ENCODE measurements at regions of chrX and their contacts with region 1.

Region 1: DNA sequence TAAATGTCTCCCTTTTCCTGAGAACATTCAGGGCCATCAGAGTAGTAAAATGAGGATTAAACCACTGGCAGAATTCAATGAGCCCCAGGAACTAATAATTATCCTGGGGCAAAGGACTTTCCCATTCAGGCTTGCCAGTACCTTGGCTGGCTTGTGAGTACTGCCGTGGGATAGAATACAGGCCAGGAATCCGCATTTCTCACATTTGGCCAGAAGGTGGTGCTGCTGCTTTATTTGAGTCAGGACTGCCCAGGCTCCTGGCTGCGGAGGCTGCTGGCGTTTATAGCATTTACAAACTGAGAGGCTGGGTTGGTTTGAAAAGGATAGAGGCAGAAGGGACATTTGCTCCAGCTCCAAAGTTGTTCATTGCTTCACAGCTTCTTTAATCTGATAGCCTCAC is 91.4 kb downstream of the RTL9 start:
- DNase-seq: peak; percentile 19 to 58
- ATAC-seq: peak; percentile 76 to 85
- H3K4me3 ChIP-seq: no peak overlapping the region
- H3K27ac ChIP-seq: no peak overlapping the region
- H3K4me1 ChIP-seq: no peaks in the 10 kb centered on the region
- H3K27me3 ChIP-seq: no peaks in the 10 kb centered on the region
- CTCF ChIP-seq: peak; percentile 44 to 70 (median 55)
- POLR2A ChIP-seq: no peak

Region 2: DNA sequence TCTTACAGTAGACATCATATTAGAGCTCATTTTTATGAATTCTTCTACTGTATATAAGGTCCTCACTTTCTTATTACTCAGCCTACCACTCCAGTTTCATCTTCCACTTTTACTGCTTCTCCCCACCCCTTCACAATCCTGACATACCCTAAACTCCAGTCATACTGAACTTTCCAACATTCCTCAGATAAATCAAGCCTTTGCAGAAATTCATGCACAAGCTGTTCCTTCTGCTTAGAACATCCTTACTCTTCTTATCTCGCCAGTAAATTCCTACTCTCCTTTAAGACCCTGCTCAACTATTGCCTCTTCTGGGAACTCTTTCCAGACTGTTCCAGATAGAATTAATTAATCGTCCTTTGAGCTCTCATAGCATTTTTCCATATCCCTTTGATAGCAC is 66.6 kb before region 1 on chrX:
- in situ Hi-C with region 1: no loop called
- intact Hi-C with region 1: no loop called
- DNase-seq: no peak
- ATAC-seq: no peak
- H3K4me3 ChIP-seq: no peak overlapping the region
- H3K27ac ChIP-seq: no peak overlapping the region
- H3K4me1 ChIP-seq: no peaks in the 10 kb centered on the region
- H3K27me3 ChIP-seq: no peaks in the 10 kb centered on the region
- CTCF ChIP-seq: no peak
- POLR2A ChIP-seq: no peak

Region 3: GRCh38 chrX:110665223-110666002 is 215.4 kb after region 1 on chrX:
- in situ Hi-C with region 1: loop called in 1 of 4 experiments (anchors 25 kb)
- intact Hi-C with region 1: loop called (anchors 5 kb)
- DNase-seq: no peak
- ATAC-seq: no peak
- H3K4me3 ChIP-seq: no peak overlapping the region
- H3K27ac ChIP-seq: no peak overlapping the region
- H3K4me1 ChIP-seq: no peaks in the 10 kb centered on the region
- H3K27me3 ChIP-seq: no peaks in the 10 kb centered on the region
- CTCF ChIP-seq: peak in 2 of 5 experiments; percentile 13 to 43
- POLR2A ChIP-seq: no peak

Region 4: GRCh38 chrX:110847334-110847733 is 397.3 kb after region 1 on chrX:
- in situ Hi-C with region 1: loop called (anchors 5 to 10 kb)
- intact Hi-C with region 1: loop called (anchors 1 kb)
- DNase-seq: no peak
- ATAC-seq: peak; percentile 63 to 65
- H3K4me3 ChIP-seq: no peak overlapping the region
- H3K27ac ChIP-seq: no peak overlapping the region
- H3K4me1 ChIP-seq: no peaks in the 10 kb centered on the region
- H3K27me3 ChIP-seq: peaks cover 0 to 4% (median 3%) of the 10 kb centered on the region in 3 donors
- CTCF ChIP-seq: peak in 4 of 5 experiments; percentile 27 to 65 (median 45)
- POLR2A ChIP-seq: no peak

Region 5: DNA sequence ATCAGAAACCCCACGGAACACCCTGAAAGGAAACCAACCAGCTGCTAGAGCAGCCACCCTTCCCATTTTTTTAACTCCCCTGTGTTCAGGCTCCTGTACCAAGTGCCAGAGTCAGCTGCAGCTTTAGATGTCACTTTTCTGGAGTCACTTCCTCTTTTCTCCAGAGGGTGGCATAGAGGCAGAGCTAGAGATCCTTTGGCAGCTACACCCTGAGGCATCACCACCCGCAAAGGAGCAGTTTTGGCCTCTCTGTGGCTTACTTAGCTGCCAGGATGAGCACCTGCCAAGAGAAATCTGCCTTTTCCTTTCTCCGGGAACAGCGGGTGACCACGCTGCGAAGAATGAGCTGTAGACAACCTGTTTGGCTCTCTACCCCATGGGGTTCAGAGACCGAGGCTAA is 403.6 kb after region 1 on chrX:
- in situ Hi-C with region 1: loop called (anchors 5 to 10 kb)
- intact Hi-C with region 1: no loop called
- DNase-seq: no peak
- ATAC-seq: no peak
- H3K4me3 ChIP-seq: no peak overlapping the region
- H3K27ac ChIP-seq: no peak overlapping the region
- H3K4me1 ChIP-seq: no peaks in the 10 kb centered on the region
- H3K27me3 ChIP-seq: peaks cover 0 to 4% (median 0%) of the 10 kb centered on the region in 3 donors
- CTCF ChIP-seq: peak in 1 of 5 experiments; percentile 5
- POLR2A ChIP-seq: no peak

Measured in gastrocnemius medialis (tissue), 4 donors.